A673 (cell line): ENCODE measurements at regions of chr2 and their contacts with region 1.

Region 1: DNA sequence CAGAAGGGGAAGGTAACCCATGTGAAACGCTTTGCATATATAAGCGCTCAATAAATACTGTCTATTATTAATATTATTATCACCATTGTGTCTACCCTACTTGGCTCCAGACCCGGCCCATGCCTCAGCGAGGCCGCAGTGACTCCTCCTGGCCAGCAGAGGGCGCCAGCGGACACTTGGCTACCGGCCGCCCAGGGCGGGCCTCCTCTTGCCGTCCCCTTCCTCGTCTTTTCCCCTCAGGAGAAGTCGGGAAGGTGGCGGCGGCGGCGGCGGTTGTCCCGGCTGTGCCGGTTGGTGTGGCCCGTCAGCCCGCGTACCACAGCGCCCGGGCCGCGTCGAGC is at the start of gene AGFG1:
- DNase-seq: peak; percentile 89
- H3K4me3 ChIP-seq: peak within 1 kb of the TSS; percentile 93
- H3K27ac ChIP-seq: peak within 1 kb of the TSS; percentile 89
- H3K4me1 ChIP-seq: peaks cover 13% of the 10 kb centered on the region
- H3K27me3 ChIP-seq: no peaks in the 10 kb centered on the region
- CTCF ChIP-seq: peak; percentile 97
- total RNA-seq, gene AGFG1: 118 and 122 TPM in 2 replicates

Region 2: DNA sequence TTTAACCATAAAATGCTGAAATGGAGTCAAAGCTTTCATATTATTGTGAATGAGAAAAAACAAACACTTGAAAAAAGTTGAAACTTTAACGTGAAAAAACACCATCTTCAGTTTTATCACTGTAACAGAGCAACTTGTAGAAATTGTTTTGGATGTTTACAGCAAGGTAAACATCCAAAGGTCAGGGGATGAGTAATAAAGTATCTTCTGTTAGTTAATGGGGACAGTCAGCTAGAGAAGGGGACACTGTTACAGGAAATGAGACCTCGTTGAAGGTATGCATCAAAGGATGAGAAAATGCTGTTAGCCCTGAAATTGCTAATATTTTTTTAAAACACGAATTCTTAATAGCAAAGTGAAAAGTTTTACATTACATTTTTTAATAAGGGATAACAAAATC is 633.2 kb before region 1 on chr2:
- CTCF ChIA-PET with region 1: no interaction called
- POLR2A ChIA-PET with region 1: interaction called, 13 read pairs
- intact Hi-C with region 1: no loop called
- DNase-seq: no peak
- H3K4me3 ChIP-seq: no peak overlapping the region
- H3K27ac ChIP-seq: no peak overlapping the region
- H3K4me1 ChIP-seq: peaks cover 12% of the 10 kb centered on the region
- H3K27me3 ChIP-seq: no peaks in the 10 kb centered on the region
- CTCF ChIP-seq: no peak

Region 3: DNA sequence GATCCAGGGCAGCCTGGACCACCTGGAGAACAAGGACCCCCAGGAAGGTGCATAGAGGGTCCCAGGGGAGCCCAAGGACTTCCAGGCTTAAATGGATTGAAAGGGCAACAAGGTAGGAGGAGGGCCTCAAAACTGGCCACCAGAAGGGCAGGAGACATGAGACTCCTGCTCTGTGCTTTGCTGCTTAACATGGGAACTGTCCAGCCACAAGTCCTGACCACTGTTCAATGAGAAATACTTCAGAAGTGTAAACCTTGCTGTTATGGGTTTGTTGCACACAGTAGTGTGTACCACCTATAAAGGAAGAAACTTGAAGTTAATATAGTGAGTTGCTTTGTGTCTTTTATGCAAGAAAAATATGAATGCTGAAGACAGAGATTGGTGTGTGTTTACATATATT is 191.0 kb before region 1 on chr2:
- CTCF ChIA-PET with region 1: no interaction called
- POLR2A ChIA-PET with region 1: no interaction called
- intact Hi-C with region 1: no loop called
- DNase-seq: no peak
- H3K4me3 ChIP-seq: no peak overlapping the region
- H3K27ac ChIP-seq: no peak overlapping the region
- H3K4me1 ChIP-seq: no peaks in the 10 kb centered on the region
- H3K27me3 ChIP-seq: no peaks in the 10 kb centered on the region
- CTCF ChIP-seq: no peak

Region 4: DNA sequence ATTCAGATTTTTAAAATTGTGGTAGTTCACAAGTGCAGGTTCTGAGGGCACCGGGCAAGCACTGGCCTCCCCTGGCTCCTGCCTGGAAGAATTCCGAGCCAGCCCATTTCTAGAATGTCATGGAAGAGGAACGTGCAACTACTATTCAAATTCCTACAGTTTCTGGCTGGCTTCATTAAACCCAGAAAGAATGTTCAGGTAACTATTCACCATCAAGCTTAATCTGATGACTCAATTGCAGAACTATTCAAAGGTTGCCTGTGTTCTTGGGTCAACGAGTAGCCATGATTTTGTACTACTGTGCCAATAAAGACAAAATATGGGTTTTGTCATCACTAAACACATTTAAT is 161.2 kb before region 1 on chr2:
- CTCF ChIA-PET with region 1: no interaction called
- POLR2A ChIA-PET with region 1: no interaction called
- intact Hi-C with region 1: no loop called
- DNase-seq: no peak
- H3K4me3 ChIP-seq: no peak overlapping the region
- H3K27ac ChIP-seq: no peak overlapping the region
- H3K4me1 ChIP-seq: no peaks in the 10 kb centered on the region
- H3K27me3 ChIP-seq: no peaks in the 10 kb centered on the region
- CTCF ChIP-seq: no peak

Region 5: GRCh38 chr2:228652366-228652765 is 1180.5 kb after region 1 on chr2:
- CTCF ChIA-PET with region 1: no interaction called
- POLR2A ChIA-PET with region 1: no interaction called
- intact Hi-C with region 1: no loop called
- DNase-seq: no peak
- H3K4me3 ChIP-seq: no peak overlapping the region
- H3K27ac ChIP-seq: no peak overlapping the region
- H3K4me1 ChIP-seq: peaks cover 10% of the 10 kb centered on the region
- H3K27me3 ChIP-seq: no peaks in the 10 kb centered on the region
- CTCF ChIP-seq: no peak